Heart left ventricle (tissue), 16 donors: ENCODE measurements at regions of chr5 and their contacts with region 1.

Region 1: DNA sequence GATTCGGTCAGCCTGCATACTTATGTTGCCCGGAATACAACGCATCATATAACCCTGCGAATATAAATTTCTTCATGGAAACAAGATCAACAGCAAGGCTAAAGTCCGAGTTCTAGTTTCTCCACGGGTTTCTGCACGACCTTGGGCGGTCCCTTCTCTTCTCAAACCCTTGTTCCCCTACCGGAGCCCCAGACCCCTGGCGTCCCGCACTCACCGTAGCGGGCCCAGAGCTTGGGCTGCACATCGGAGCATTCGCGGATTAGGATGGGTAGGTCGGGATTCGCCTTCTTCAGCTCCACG is 438 bp downstream of the NDUFA2 start:
- DNase-seq: no peak
- ATAC-seq: peak in 1 of 4 donors; percentile 8
- H3K4me3 ChIP-seq: peak overlapping the region; percentile 58 to 100 (median 83)
- H3K27ac ChIP-seq: peak overlapping the region; percentile 48 to 94 (median 86)
- H3K4me1 ChIP-seq: peaks cover 0 to 40% (median 26%) of the 10 kb centered on the region in 12 donors
- H3K27me3 ChIP-seq: no peaks in the 10 kb centered on the region
- CTCF ChIP-seq: no peak
- POLR2A ChIP-seq: no peak

Region 2: DNA sequence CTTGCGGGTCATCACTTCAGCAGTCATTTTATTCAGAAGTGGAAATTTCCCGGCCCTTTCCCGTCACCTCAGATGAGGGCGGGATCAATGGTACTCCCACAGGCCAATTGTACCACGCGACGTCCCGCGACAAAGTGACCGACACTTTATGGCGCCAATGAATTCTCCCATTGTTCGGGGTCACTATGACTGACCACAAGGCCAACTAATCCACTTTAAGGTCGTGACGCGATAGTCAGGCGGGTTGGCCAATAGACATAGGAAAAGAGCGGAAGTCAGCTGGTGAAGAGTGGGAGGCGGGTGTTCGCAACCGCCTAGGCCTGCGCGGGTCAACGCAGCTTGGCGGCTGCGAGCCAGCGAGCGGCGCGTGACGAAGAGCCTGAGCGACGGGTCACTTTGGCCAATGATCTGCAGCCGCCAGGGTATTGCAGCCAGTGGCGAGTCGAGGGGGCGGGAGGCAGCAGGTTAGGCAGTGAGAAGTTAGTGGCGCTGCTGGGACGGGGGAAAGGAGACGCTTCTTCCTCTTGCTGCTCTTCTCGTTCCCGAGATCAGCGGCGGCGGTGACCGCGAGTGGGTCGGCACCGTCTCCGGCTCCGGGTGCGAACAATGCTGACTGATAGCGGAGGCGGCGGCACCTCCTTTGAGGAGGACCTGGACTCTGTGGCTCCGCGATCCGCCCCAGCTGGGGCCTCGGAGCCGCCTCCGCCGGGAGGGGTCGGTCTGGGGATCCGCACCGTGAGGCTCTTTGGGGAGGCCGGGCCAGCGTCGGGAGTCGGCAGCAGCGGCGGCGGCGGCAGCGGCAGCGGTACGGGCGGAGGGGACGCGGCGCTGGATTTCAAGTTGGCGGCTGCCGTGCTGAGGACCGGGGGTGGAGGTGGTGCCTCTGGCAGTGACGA is 245.4 kb before region 1 on chr5 and contains the start of gene ANKHD1:
- intact Hi-C with region 1: loop called in 1 of 10 experiments (anchors 10 kb)
- DNase-seq: peak; percentile 99
- ATAC-seq: peak; percentile 92 to 97 (median 96)
- H3K4me3 ChIP-seq: peak within 1 kb of the TSS; percentile 68 to 100 (median 94)
- H3K27ac ChIP-seq: peak within 1 kb of the TSS; percentile 80 to 98 (median 96)
- H3K4me1 ChIP-seq: peaks cover 12 to 42% (median 30%) of the 10 kb centered on the region in 12 donors
- H3K27me3 ChIP-seq: no peaks in the 10 kb centered on the region
- CTCF ChIP-seq: peak in 2 of 12 donors; percentile 3 to 24
- POLR2A ChIP-seq: peak; percentile 95 to 98
- total RNA-seq, gene ANKHD1: 49.5 to 78.8 (median 63.6) TPM

Region 3: DNA sequence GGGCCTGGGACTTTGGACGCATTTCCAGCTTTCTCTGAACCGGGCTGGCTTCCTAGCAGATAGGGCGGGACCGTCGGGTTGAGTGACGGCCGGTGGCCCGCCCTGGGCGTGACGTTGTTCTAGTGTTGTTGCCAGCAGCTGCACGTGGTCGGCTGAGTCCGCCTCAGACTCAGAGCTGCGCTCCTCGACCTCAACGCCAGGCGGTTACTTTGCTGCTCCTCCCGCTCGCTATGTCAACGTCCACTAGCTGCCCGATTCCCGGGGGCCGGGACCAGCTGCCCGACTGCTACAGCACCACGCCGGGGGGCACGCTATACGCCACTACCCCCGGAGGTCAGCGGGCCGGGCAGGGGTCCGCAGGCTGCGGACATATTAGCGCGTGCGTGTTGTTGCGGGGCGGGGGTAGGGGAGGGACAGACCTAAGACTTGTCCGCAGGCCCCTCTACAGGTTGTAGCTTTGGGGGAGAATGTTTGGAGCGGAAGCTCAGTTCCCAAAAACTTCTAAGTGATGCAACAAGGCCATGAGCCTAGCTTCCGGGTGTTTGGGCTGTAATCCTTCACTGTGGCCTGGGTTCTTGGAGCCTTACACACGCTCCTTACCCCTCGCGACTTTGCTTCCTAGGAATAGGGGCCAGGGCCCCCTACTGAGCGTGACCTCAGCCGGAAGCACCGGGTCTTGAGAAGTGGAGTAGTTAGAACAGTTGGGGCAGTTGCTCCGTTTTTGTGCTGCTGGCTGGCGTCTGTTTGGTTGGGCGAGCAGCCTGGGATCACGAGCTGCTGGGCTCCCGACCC is 99.3 kb before region 1 on chr5 and contains the start of gene EIF4EBP3:
- intact Hi-C with region 1: loop called in 4 of 10 experiments (anchors 1 to 5 kb)
- DNase-seq: peak; percentile 97 to 98 (median 98)
- ATAC-seq: peak; percentile 90 to 96 (median 94)
- H3K4me3 ChIP-seq: peak within 1 kb of the TSS; percentile 25 to 65 (median 54)
- H3K27ac ChIP-seq: peak within 1 kb of the TSS; percentile 83 to 98 (median 94)
- H3K4me1 ChIP-seq: peaks cover 14 to 50% (median 43%) of the 10 kb centered on the region in 12 donors
- H3K27me3 ChIP-seq: no peaks in the 10 kb centered on the region
- CTCF ChIP-seq: peak; percentile 35 to 81 (median 56)
- POLR2A ChIP-seq: peak in 1 of 2 donors; percentile 83
- total RNA-seq, gene EIF4EBP3: 4.7 to 34.9 (median 14.6) TPM

Region 4: GRCh38 chr5:140664359-140665119 is 17.5 kb after region 1 on chr5 and contains the start of gene WDR55:
- intact Hi-C with region 1: loop called in 2 of 10 experiments (anchors 1 to 2 kb)
- DNase-seq: peak; percentile 96 to 98 (median 97)
- ATAC-seq: peak; percentile 98 to 99 (median 98)
- H3K4me3 ChIP-seq: peak within 1 kb of the TSS; percentile 50 to 98 (median 90)
- H3K27ac ChIP-seq: peak within 1 kb of the TSS; percentile 90 to 99 (median 94)
- H3K4me1 ChIP-seq: peaks cover 0 to 34% (median 27%) of the 10 kb centered on the region in 12 donors
- H3K27me3 ChIP-seq: no peaks in the 10 kb centered on the region
- CTCF ChIP-seq: no peak
- POLR2A ChIP-seq: peak; percentile 54 to 80
- total RNA-seq, gene WDR55: 9.6 to 17.5 (median 12.2) TPM

Region 5: GRCh38 chr5:140690941-140691924 is 44.2 kb after region 1 on chr5 and contains the starts of genes HARS1 and HARS2:
- intact Hi-C with region 1: loop called in 3 of 10 experiments (anchors 5 to 10 kb)
- DNase-seq: peak; percentile 89 to 94 (median 92)
- ATAC-seq: peak; percentile 96 to 98 (median 98)
- H3K4me3 ChIP-seq: peak within 1 kb of the TSS; percentile 72 to 98 (median 81)
- H3K27ac ChIP-seq: peak within 1 kb of the TSS; percentile 37 to 95 (median 88)
- H3K4me1 ChIP-seq: peaks cover 10 to 39% (median 27%) of the 10 kb centered on the region in 12 donors
- H3K27me3 ChIP-seq: no peaks in the 10 kb centered on the region
- CTCF ChIP-seq: peak in 3 of 12 donors; percentile 15 to 21 (median 20)
- POLR2A ChIP-seq: peak in 1 of 2 donors; percentile 55
- total RNA-seq, gene HARS1: 31.3 to 43.9 (median 36.0) TPM
- total RNA-seq, gene HARS2: 20.0 to 31.7 (median 24.6) TPM